Heart right ventricle (tissue), 16 donors: ENCODE measurements at regions of chr1 and their contacts with region 1.

Region 1: GRCh38 chr1:81414488-81415015 is 386.2 kb upstream of the ADGRL2 start:
- DNase-seq: peak; percentile 82 to 83
- ATAC-seq: peak; percentile 84 to 94 (median 92)
- H3K4me3 ChIP-seq: no peak overlapping the region
- H3K27ac ChIP-seq: peak overlapping the region in 9 of 10 donors; percentile 15 to 71 (median 46)
- H3K4me1 ChIP-seq: peaks cover 0 to 40% (median 18%) of the 10 kb centered on the region in 9 donors
- H3K27me3 ChIP-seq: no peaks in the 10 kb centered on the region
- CTCF ChIP-seq: peak; percentile 61 to 95 (median 91)

Region 2: DNA sequence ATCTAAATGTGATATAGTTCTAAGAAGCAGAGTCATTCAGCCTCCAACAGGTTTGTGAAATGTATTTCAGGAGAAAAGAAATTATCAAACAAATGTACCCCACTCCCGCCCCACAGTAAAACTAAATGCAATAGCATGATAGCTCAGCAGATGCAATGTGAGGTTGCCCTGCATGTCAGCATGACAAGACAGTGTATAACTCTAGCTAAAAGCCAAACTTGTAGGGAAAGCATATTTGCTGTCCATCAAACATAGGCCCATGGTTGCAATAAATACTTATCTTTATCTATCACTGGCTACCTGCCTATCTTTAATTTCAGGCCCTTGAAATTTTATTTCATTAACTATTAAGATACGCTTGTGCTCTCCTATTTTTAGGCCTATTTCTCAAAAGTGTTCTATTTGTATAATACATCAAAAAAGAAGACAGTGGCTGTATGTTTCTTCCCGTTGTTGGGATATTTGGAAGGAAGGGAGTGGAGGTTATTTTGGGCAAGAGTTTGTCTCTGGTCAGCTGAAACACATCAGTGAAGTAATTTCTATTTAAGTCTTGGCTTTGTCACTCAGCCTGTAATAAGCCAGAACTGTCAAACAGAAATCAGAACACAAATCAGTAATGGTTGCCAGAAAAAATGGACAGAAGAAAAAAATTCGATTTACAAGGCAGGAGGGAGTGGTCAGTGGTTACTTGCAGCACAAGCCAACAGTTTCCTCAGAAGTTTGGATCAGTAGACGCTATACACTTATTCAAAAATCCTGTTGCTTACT is 78.7 kb after region 1 on chr1:
- intact Hi-C with region 1: loop called in 2 of 10 experiments (anchors 5 to 10 kb)
- DNase-seq: peak in 1 of 2 donors; percentile 24
- ATAC-seq: peak; percentile 89 to 97 (median 95)
- H3K4me3 ChIP-seq: peak overlapping the region in 1 of 10 donors; percentile 0
- H3K27ac ChIP-seq: peak overlapping the region; percentile 19 to 90 (median 79)
- H3K4me1 ChIP-seq: peaks cover 6 to 43% (median 29%) of the 10 kb centered on the region in 9 donors
- H3K27me3 ChIP-seq: no peaks in the 10 kb centered on the region
- CTCF ChIP-seq: no peak

Region 3: DNA sequence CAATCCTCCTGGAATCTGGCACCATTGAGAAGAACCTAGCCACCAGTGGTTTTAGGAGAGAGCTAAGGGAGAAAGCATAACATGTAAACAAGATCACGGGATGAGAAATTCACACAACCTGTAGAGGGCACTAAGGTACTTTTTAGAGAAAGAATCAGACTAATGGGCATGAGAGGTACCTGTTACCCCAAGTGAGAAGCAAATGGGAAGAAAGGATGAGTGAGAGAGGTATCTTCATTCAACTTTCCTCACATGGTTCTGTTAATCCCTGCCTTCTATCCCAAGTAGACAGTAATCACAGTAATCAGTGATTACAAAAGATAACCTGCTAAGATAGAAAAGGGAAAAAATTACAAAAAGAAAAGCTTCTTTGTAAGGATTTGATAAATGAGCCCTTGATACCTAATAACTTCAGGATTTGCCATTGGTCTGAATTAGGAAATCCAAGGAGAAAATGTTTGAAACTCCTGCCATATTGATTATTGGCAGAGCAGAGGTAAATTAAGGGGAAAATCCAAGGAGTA is 135.1 kb after region 1 on chr1:
- intact Hi-C with region 1: loop called in 3 of 10 experiments (anchors 2 to 10 kb)
- DNase-seq: no peak
- ATAC-seq: peak in 6 of 8 donors; percentile 59 to 75 (median 68)
- H3K4me3 ChIP-seq: no peak overlapping the region
- H3K27ac ChIP-seq: no peak overlapping the region
- H3K4me1 ChIP-seq: peaks cover 0 to 13% (median 0%) of the 10 kb centered on the region in 9 donors
- H3K27me3 ChIP-seq: no peaks in the 10 kb centered on the region
- CTCF ChIP-seq: peak; percentile 6 to 66 (median 48)

Region 4: GRCh38 chr1:81760477-81761097 is 346.0 kb after region 1 on chr1:
- intact Hi-C with region 1: loop called in 3 of 10 experiments (anchors 5 to 10 kb)
- DNase-seq: no peak
- ATAC-seq: no peak
- H3K4me3 ChIP-seq: no peak overlapping the region
- H3K27ac ChIP-seq: no peak overlapping the region
- H3K4me1 ChIP-seq: peaks cover 0 to 14% (median 0%) of the 10 kb centered on the region in 9 donors
- H3K27me3 ChIP-seq: no peaks in the 10 kb centered on the region
- CTCF ChIP-seq: peak in 8 of 9 donors; percentile 21 to 65 (median 54)